K562 (cell line): ENCODE measurements at regions of chr2 and their contacts with region 1.

Region 1: GRCh38 chr2:11863513-11864328 is 117.3 kb downstream of the LPIN1 start:
- DNase-seq: peak; percentile 89 to 90 (median 90)
- ATAC-seq: peak; percentile 87
- H3K4me3 ChIP-seq: no peak overlapping the region
- H3K27ac ChIP-seq: peak overlapping the region; percentile 4; the same call in 1 of the 3 replicates
- H3K4me1 ChIP-seq: peaks cover 12 to 43% of the 10 kb centered on the region in 2 experiments
- H3K27me3 ChIP-seq: no peaks in the 10 kb centered on the region
- CTCF ChIP-seq: peak; percentile 85 to 94 (median 87)
- EP300 ChIP-seq: peak; percentile 20; the same call in 1 of the 2 replicates
- POLR2A ChIP-seq: no peak
- RAD21 ChIP-seq: peak; percentile 92 to 93

Region 2: DNA sequence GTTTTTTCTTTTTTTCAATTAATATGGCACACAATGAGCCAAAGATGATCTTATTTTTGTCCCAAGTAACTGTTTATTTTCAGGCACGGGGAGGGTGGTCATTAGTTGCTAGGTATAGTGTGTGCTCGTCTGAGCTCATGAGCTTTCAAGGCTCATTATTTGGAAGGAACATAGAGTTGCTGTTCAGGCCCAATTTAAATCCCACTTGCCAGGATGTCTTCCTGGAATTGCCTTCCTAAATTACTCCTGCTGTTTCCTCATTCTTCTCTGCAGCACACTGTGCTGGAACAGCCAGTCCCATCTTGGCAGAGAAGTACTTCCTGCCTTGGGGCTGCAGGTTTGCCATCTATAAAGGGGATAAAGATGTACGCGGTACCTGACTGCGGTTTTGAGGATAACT is 292.6 kb before region 1 on chr2:
- CTCF ChIA-PET with region 1: no interaction called
- POLR2A ChIA-PET with region 1: no interaction called
- in situ Hi-C with region 1: no loop called
- intact Hi-C with region 1: no loop called
- DNase-seq: no peak
- ATAC-seq: no peak
- H3K4me3 ChIP-seq: no peak overlapping the region
- H3K27ac ChIP-seq: no peak overlapping the region
- H3K4me1 ChIP-seq: peaks cover 2 to 8% of the 10 kb centered on the region in 2 experiments; a peak in 3 of 5 replicates
- H3K27me3 ChIP-seq: peaks cover 21 to 72% of the 10 kb centered on the region in 2 experiments; a peak in 4 of 5 replicates
- CTCF ChIP-seq: no peak
- EP300 ChIP-seq: no peak
- POLR2A ChIP-seq: no peak
- RAD21 ChIP-seq: no peak

Region 3: GRCh38 chr2:11829947-11830707 is 33.6 kb before region 1 on chr2:
- CTCF ChIA-PET with region 1: no interaction called
- POLR2A ChIA-PET with region 1: interaction called, 4 read pairs
- in situ Hi-C with region 1: no loop called
- intact Hi-C with region 1: loop called (anchors 1 kb)
- DNase-seq: peak; percentile 74 to 88 (median 80)
- ATAC-seq: peak; percentile 96
- H3K4me3 ChIP-seq: peak overlapping the region; percentile 31
- H3K27ac ChIP-seq: peak overlapping the region; percentile 89
- H3K4me1 ChIP-seq: peaks cover 10 to 26% of the 10 kb centered on the region in 2 experiments
- H3K27me3 ChIP-seq: no peaks in the 10 kb centered on the region
- CTCF ChIP-seq: peak; percentile 68 to 81 (median 71)
- EP300 ChIP-seq: peak; percentile 77
- POLR2A ChIP-seq: peak; percentile 56
- RAD21 ChIP-seq: peak; percentile 92

Region 4: DNA sequence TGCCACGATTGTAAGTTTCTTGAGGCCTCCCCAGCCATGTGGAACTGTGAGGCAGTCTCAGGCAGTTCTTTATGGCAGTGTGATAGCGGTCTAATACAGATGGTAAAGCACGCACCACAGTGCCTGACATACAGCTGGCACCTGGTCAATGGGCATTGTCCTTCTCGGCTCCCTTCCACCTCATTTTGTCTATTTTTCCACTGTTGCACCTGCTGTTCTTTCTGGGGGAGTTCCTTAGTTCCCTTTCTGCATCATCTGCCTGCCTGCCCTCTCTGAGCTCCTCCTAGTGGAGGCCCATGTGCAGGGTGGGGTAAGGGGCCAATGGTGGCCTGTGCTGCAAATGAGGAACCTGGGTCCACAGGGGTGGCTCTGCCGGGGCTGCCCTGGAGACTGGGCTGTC is 40.3 kb after region 1 on chr2:
- CTCF ChIA-PET with region 1: no interaction called
- POLR2A ChIA-PET with region 1: no interaction called
- in situ Hi-C with region 1: no loop called
- intact Hi-C with region 1: loop called (anchors 5 kb)
- DNase-seq: peak in 2 of 4 experiments; percentile 25 to 38
- ATAC-seq: peak; percentile 70
- H3K4me3 ChIP-seq: no peak overlapping the region
- H3K27ac ChIP-seq: no peak overlapping the region
- H3K4me1 ChIP-seq: peaks cover 6 to 9% of the 10 kb centered on the region in 2 experiments; a peak in 3 of 5 replicates
- H3K27me3 ChIP-seq: no peaks in the 10 kb centered on the region
- CTCF ChIP-seq: peak; percentile 26 to 42 (median 40); a peak in 3 of 6 replicates
- EP300 ChIP-seq: no peak
- POLR2A ChIP-seq: no peak
- RAD21 ChIP-seq: peak in 1 of 2 experiments; percentile 25; a peak in 2 of 4 replicates

Region 5: DNA sequence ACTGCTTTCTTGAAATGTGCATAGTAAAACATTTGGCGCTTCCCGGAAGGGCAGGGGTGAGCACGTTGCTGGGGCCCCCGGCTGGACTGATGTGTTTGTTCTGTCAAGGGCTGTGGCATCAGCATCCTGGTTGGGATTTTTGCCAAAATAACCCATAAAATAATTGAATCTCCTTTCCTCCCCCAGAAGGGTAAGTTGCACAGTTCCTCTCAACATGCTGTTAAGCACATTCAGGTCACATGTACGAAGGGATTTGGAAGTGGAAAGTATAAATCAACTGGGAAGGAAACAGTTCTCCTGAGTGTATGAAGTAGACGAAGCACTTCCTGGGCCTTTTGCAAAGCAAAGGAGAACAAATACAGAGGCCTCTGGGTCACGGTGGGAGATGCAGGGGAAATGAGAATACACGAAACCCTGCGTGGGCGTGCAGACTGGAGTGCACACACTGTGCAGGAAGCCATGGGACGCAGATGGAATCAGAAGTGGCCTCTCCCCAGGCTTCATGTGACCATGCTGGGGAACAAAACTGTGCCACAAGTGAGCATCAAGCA is 66.6 kb after region 1 on chr2:
- CTCF ChIA-PET with region 1: no interaction called
- POLR2A ChIA-PET with region 1: no interaction called
- in situ Hi-C with region 1: loop called (anchors 5 kb)
- intact Hi-C with region 1: no loop called
- DNase-seq: peak in 1 of 4 experiments; percentile 26
- ATAC-seq: peak; percentile 15; the same call in 1 of the 3 replicates
- H3K4me3 ChIP-seq: no peak overlapping the region
- H3K27ac ChIP-seq: no peak overlapping the region
- H3K4me1 ChIP-seq: peaks cover 8 to 25% of the 10 kb centered on the region in 2 experiments; a peak in 4 of 5 replicates
- H3K27me3 ChIP-seq: no peaks in the 10 kb centered on the region
- CTCF ChIP-seq: no peak
- EP300 ChIP-seq: no peak
- POLR2A ChIP-seq: no peak
- RAD21 ChIP-seq: no peak

Region 6: DNA sequence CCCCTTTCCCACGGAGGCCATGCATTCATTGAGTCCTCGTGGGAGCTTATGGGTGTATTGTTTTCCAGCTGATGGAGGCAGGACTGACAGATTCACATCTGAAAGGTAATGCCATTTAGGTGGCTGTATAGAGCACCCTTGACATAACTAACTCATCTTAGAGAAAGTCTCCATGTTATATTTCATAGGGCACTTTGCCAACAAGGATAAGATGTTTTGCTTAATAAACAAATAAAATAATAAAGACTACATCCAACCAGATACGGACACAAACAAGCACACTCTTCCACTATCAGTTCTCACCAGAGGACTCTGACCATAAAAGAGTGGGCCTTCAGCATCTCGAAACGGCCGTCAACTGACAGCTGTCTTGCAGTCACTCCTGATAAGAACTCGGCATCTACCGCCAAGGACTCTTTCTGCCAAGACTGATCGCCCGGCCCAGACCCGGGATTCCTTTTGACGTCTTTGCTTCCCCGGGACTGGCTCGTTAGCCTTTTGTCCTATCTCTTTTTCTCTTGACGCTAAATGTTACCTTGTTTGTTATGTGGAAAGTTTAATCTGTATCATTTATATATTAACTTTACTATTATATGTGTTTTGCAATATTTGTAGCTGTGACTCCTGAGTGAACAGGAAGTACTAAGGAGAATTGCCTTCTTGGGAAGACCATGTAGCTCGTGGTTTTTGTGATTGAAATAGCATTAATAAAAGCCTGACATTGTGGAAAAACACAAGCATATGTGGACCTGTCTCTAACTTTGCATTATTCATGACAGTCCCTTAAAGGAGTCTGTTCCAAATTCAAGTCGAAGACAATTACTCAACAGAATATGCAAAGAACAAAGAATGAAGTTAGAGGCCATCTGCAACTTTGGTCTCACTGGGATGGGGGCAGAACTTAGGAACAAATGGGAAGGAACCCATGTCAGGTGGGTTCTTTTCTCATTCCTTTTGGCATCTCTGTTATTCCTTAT is 77.8 kb after region 1 on chr2:
- CTCF ChIA-PET with region 1: no interaction called
- POLR2A ChIA-PET with region 1: no interaction called
- in situ Hi-C with region 1: no loop called
- intact Hi-C with region 1: loop called (anchors 2 kb)
- DNase-seq: peak; percentile 85 to 95 (median 91)
- ATAC-seq: peak; percentile 95
- H3K4me3 ChIP-seq: no peak overlapping the region
- H3K27ac ChIP-seq: peak overlapping the region; percentile 74
- H3K4me1 ChIP-seq: peaks cover 9 to 44% of the 10 kb centered on the region in 2 experiments
- H3K27me3 ChIP-seq: no peaks in the 10 kb centered on the region
- CTCF ChIP-seq: no peak
- EP300 ChIP-seq: peak; percentile 99
- POLR2A ChIP-seq: no peak
- RAD21 ChIP-seq: peak; percentile 31 to 32; a peak in 3 of 4 replicates

Region 7: GRCh38 chr2:11955314-11955713 is 91.6 kb after region 1 on chr2:
- CTCF ChIA-PET with region 1: interaction called, 5 read pairs
- POLR2A ChIA-PET with region 1: no interaction called
- in situ Hi-C with region 1: no loop called
- intact Hi-C with region 1: loop called (anchors 1 kb)
- DNase-seq: no peak
- ATAC-seq: no peak
- H3K4me3 ChIP-seq: no peak overlapping the region
- H3K27ac ChIP-seq: no peak overlapping the region
- H3K4me1 ChIP-seq: no peaks in the 10 kb centered on the region; a peak in 3 of 5 replicates
- H3K27me3 ChIP-seq: no peaks in the 10 kb centered on the region
- CTCF ChIP-seq: no peak
- EP300 ChIP-seq: no peak
- POLR2A ChIP-seq: no peak
- RAD21 ChIP-seq: no peak

Region 8: DNA sequence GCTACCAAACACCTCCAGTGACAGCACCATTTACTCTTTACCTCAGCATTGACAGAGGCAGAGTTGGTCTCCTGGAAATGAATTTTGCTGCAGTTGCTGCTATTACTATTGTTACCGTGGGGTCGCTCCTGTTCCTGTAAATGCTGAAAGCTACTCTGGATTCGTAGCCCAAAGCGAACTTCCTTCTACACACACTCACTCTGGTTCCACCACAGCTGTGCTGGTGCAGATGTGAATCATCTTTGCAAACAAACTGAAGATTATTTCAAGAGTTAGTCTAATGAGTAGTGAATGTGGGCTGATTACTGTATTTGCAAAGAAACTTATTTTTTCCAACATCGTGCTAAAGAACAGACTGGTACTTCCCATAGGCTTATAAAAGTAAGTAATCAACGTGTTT is 186.7 kb after region 1 on chr2:
- CTCF ChIA-PET with region 1: interaction called, 4 read pairs
- POLR2A ChIA-PET with region 1: no interaction called
- in situ Hi-C with region 1: no loop called
- intact Hi-C with region 1: loop called (anchors 1 kb)
- DNase-seq: peak in 2 of 4 experiments; percentile 51 to 69
- ATAC-seq: peak; percentile 87
- H3K4me3 ChIP-seq: no peak overlapping the region
- H3K27ac ChIP-seq: no peak overlapping the region
- H3K4me1 ChIP-seq: peaks cover 0 to 7% of the 10 kb centered on the region in 2 experiments; a peak in 2 of 5 replicates
- H3K27me3 ChIP-seq: no peaks in the 10 kb centered on the region
- CTCF ChIP-seq: peak; percentile 50 to 73 (median 52)
- EP300 ChIP-seq: peak; percentile 40; the same call in 1 of the 2 replicates
- POLR2A ChIP-seq: no peak
- RAD21 ChIP-seq: peak; percentile 60 to 73